Prostate gland (tissue), 2 donors: ENCODE measurements at regions of chr1 and their contacts with region 1.

Region 1: GRCh38 chr1:211382714-211383480 is 56.3 kb downstream of the TRAF5 start:
- DNase-seq: peak; percentile 89
- H3K4me3 ChIP-seq: peak overlapping the region; percentile 50 to 63
- H3K27ac ChIP-seq: peak overlapping the region; percentile 91 to 98
- H3K4me1 ChIP-seq: no peaks in the 10 kb centered on the region
- H3K27me3 ChIP-seq: no peaks in the 10 kb centered on the region
- CTCF ChIP-seq: no peak
- POLR2A ChIP-seq: peak; percentile 84

Region 2: DNA sequence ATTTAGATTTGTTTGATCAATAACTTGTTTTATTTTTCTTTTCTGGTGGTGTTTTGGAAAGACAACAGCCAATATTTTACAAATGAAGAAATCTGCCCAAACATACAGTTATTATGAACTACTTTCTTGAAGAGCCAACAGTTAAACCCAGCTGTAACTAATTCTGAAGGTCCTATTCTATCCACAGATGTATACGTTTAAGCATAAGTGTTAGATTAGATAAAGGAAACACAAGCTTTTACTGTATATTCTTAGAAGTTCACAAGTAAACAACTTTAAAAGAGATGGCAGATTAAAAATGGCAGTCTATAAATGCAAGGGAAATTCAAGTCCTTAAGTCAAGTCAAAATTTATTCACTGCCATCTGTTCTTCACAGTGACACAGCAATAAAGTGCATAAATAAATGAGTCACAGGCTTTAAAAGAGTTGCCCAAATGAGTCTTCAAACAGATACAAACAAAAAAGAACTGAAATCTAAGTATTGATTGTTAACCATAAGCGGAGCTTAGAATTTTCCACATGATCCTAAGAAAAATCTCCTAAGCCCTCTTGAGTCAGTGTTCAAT is 199.1 kb before region 1 on chr1:
- intact Hi-C with region 1: no loop called
- DNase-seq: no peak
- H3K4me3 ChIP-seq: no peak overlapping the region
- H3K27ac ChIP-seq: no peak overlapping the region
- H3K4me1 ChIP-seq: no peaks in the 10 kb centered on the region
- H3K27me3 ChIP-seq: no peaks in the 10 kb centered on the region
- CTCF ChIP-seq: no peak
- POLR2A ChIP-seq: no peak

Region 3: DNA sequence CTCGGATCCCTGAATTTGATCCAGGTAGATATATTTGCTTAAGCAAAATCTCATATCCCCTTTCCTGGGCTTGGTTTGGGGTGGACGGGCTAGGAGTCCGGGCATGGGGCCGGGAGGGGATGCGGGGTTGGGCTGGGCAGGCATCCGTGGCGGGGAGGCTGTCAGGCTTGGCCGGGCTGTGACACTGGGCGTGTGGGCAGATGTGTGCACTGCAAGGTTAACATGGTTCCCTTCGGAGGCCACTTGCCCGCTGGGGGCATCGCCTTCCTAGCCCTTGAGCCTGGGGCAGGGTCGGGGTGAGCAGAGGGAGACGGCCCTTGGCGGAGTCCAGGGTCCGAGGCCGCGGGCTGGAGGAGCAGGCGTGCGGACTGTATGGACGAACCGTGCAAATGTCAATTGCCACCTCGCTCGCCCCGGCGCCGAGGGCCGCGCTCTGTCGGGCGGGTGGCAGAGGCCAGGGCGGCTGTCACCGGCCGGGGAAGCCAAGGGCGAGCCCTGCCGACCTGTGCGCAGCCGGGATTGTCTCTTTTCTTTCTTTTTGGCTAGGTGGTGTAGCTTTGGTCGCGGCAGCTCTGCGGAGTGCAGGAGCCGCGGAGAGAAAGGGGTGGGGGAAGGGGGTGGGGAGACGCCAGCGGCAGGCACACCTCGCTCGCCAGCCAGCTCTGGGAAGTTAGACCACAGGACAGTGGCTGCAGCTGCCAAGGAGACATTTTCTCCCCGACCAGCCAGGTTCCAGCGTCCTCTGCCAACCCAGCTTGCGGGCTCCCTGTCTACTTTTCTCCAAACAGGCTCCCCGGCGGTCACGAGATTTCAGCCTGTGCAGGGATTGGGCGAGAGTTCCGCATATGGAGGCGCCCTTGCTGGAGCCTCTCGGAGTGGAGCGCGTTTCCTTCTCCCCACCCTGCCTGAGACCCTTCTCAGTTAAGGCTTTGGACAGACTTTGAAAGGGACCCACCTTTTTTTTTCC is 122.5 kb before region 1 on chr1:
- intact Hi-C with region 1: loop called (anchors 10 kb)
- DNase-seq: peak; percentile 91
- H3K4me3 ChIP-seq: peak overlapping the region; percentile 97 to 98
- H3K27ac ChIP-seq: peak overlapping the region; percentile 99
- H3K4me1 ChIP-seq: peaks cover 5% of the 10 kb centered on the region
- H3K27me3 ChIP-seq: no peaks in the 10 kb centered on the region
- CTCF ChIP-seq: peak in 1 of 4 experiments; percentile 11
- POLR2A ChIP-seq: peak; percentile 62

Region 4: GRCh38 chr1:211313392-211313791 is 69.5 kb before region 1 on chr1:
- intact Hi-C with region 1: no loop called
- DNase-seq: no peak
- H3K4me3 ChIP-seq: no peak overlapping the region
- H3K27ac ChIP-seq: no peak overlapping the region
- H3K4me1 ChIP-seq: no peaks in the 10 kb centered on the region
- H3K27me3 ChIP-seq: no peaks in the 10 kb centered on the region
- CTCF ChIP-seq: no peak
- POLR2A ChIP-seq: no peak

Region 5: GRCh38 chr1:211323156-211324063 is 59.5 kb before region 1 on chr1:
- intact Hi-C with region 1: loop called (anchors 5 kb)
- DNase-seq: peak; percentile 54
- H3K4me3 ChIP-seq: no peak overlapping the region
- H3K27ac ChIP-seq: no peak overlapping the region
- H3K4me1 ChIP-seq: no peaks in the 10 kb centered on the region
- H3K27me3 ChIP-seq: no peaks in the 10 kb centered on the region
- CTCF ChIP-seq: peak; percentile 40 to 81 (median 68)
- POLR2A ChIP-seq: no peak